Activated CD4-positive, alpha-beta T cell treated with anti-CD3 and anti-CD28 coated beads for 36 hours (primary cell): ENCODE measurements at regions of chr5 and their contacts with region 1.

Region 1: GRCh38 chr5:14399054-14399692 is 182.4 kb upstream of the OTULINL start:
- DNase-seq: peak; percentile 30
- ATAC-seq: no peak
- H3K4me3 Mint-ChIP-seq: no peak overlapping the region
- H3K27ac Mint-ChIP-seq: no peak overlapping the region
- H3K4me1 Mint-ChIP-seq: peaks cover 13% of the 10 kb centered on the region
- H3K27me3 Mint-ChIP-seq: no peaks in the 10 kb centered on the region

Region 2: DNA sequence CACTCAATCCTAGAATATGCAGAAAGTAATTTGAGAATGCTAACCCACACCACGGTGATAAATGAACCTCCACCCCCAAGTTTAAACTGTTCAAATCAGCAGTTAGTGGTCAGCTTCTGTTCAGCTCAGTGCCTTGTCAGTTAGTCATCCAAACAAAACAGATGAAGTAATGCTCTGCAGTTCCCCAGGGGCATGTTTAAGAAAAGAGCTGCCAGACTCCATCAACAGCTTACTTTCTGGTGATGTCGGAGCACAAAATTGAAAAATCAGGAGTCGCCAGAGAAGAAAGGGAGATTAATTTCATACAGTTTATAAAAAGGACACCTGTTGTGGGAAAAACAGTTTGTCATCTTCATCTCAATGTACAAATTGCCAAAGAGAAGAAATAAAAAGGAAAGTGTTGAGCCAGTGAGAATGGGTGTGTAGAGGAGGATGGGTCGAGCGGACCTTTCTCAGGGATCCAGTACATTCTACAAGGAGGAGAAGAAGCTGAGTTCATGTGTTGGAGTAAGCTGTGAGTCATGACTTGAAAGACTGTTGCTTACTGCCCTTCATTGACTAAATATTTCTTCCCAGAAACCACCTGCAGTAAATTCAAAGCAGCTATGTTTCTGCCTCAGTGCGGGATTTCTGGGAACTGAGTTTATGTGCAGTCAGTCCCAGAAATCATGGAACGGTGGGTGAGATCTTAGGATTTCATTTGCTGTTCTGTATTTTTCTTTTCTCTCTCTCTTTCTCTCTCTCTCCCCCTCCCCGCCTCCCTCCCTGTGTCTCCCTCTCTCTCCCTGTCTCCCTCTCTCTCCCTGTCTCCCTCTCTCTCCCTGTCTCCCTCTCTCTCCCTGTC is 242.3 kb before region 1 on chr5:
- CTCF ChIA-PET with region 1: no interaction called
- POLR2A ChIA-PET with region 1: no interaction called
- intact Hi-C with region 1: no loop called
- DNase-seq: no peak
- ATAC-seq: peak; percentile 36
- H3K4me3 Mint-ChIP-seq: no peak overlapping the region
- H3K27ac Mint-ChIP-seq: no peak overlapping the region
- H3K4me1 Mint-ChIP-seq: no peaks in the 10 kb centered on the region
- H3K27me3 Mint-ChIP-seq: peaks cover 2% of the 10 kb centered on the region

Region 3: GRCh38 chr5:14357851-14358250 is 41.3 kb before region 1 on chr5:
- CTCF ChIA-PET with region 1: no interaction called
- POLR2A ChIA-PET with region 1: no interaction called
- intact Hi-C with region 1: no loop called
- DNase-seq: no peak
- ATAC-seq: no peak
- H3K4me3 Mint-ChIP-seq: no peak overlapping the region
- H3K27ac Mint-ChIP-seq: no peak overlapping the region
- H3K4me1 Mint-ChIP-seq: no peaks in the 10 kb centered on the region
- H3K27me3 Mint-ChIP-seq: no peaks in the 10 kb centered on the region

Region 4: GRCh38 chr5:14650052-14650451 is 250.9 kb after region 1 on chr5:
- CTCF ChIA-PET with region 1: interaction called, 65 read pairs
- POLR2A ChIA-PET with region 1: no interaction called
- intact Hi-C with region 1: loop called (anchors 1 kb)
- DNase-seq: no peak
- ATAC-seq: no peak
- H3K4me3 Mint-ChIP-seq: no peak overlapping the region
- H3K27ac Mint-ChIP-seq: no peak overlapping the region
- H3K4me1 Mint-ChIP-seq: peaks cover under 1% of the 10 kb centered on the region
- H3K27me3 Mint-ChIP-seq: peaks cover 7% of the 10 kb centered on the region

Region 5: GRCh38 chr5:14655146-14655741 is 256.1 kb after region 1 on chr5:
- CTCF ChIA-PET with region 1: interaction called, 11 read pairs
- POLR2A ChIA-PET with region 1: no interaction called
- intact Hi-C with region 1: no loop called
- DNase-seq: no peak
- ATAC-seq: no peak
- H3K4me3 Mint-ChIP-seq: no peak overlapping the region
- H3K27ac Mint-ChIP-seq: no peak overlapping the region
- H3K4me1 Mint-ChIP-seq: peaks cover 32% of the 10 kb centered on the region
- H3K27me3 Mint-ChIP-seq: peaks cover 2% of the 10 kb centered on the region

Region 6: GRCh38 chr5:15013654-15014463 is 614.7 kb after region 1 on chr5:
- CTCF ChIA-PET with region 1: no interaction called
- POLR2A ChIA-PET with region 1: no interaction called
- intact Hi-C with region 1: loop called in 1 of 2 experiments (anchors 10 kb)
- DNase-seq: no peak
- ATAC-seq: no peak
- H3K4me3 Mint-ChIP-seq: no peak overlapping the region
- H3K27ac Mint-ChIP-seq: no peak overlapping the region
- H3K4me1 Mint-ChIP-seq: no peaks in the 10 kb centered on the region
- H3K27me3 Mint-ChIP-seq: no peaks in the 10 kb centered on the region